Colonic mucosa (tissue), 4 donors: ENCODE measurements at regions of chr10 and their contacts with region 1.

Region 1: GRCh38 chr10:95693668-95694534 is at the start of gene TCTN3:
- DNase-seq: peak; percentile 97
- H3K4me3 ChIP-seq: peak within 1 kb of the TSS; percentile 65
- H3K27ac ChIP-seq: peak within 1 kb of the TSS; percentile 15
- H3K4me1 ChIP-seq: no peaks in the 10 kb centered on the region
- H3K27me3 ChIP-seq: no peaks in the 10 kb centered on the region
- CTCF ChIP-seq: peak; percentile 100
- total RNA-seq, gene TCTN3: 32.0 to 40.7 TPM

Region 2: DNA sequence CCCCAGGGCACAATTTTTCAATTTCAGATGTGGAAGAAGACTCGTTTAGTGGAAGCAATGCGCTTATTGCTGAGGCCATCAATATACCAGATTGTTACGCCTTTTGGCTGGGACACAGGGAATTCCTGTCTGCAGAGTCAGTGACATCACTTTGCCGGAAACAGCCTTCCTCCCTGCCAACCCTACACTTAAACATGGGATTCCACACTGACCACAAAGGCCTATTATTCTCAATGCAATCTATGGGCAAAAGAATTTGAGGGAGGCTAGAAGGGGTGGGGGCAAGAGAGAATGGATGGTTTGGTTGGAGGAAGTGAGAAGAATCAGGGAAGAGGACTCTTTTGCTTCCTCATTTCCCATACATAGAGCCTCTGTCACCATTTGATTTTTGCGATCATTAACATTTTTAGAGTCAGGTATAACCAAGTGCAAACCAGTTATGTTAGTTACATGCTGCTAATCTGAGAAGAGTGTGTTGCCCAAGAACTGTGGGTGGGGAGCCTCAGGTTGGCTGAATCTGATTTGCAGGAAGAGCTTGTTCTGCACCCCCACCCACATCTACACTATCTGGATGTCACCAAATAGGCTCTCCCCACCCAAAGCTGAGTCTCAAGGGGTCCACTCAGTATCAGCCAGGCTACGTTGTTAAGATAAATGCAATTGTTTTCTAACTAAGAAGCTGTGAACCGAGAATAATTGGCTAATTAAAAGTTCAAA is 120.3 kb after region 1 on chr10:
- intact Hi-C with region 1: no loop called
- DNase-seq: peak; percentile 22
- H3K4me3 ChIP-seq: no peak overlapping the region
- H3K27ac ChIP-seq: peak overlapping the region; percentile 15
- H3K4me1 ChIP-seq: no peaks in the 10 kb centered on the region
- H3K27me3 ChIP-seq: no peaks in the 10 kb centered on the region
- CTCF ChIP-seq: no peak

Region 3: GRCh38 chr10:95835149-95835860 is 141.4 kb after region 1 on chr10:
- intact Hi-C with region 1: loop called (anchors 2 kb)
- DNase-seq: no peak
- H3K4me3 ChIP-seq: no peak overlapping the region
- H3K27ac ChIP-seq: no peak overlapping the region
- H3K4me1 ChIP-seq: no peaks in the 10 kb centered on the region
- H3K27me3 ChIP-seq: no peaks in the 10 kb centered on the region
- CTCF ChIP-seq: no peak

Region 4: GRCh38 chr10:95841661-95842498 is 148.0 kb after region 1 on chr10:
- intact Hi-C with region 1: loop called (anchors 2 kb)
- DNase-seq: peak; percentile 67
- H3K4me3 ChIP-seq: no peak overlapping the region
- H3K27ac ChIP-seq: peak overlapping the region; percentile 18
- H3K4me1 ChIP-seq: no peaks in the 10 kb centered on the region
- H3K27me3 ChIP-seq: no peaks in the 10 kb centered on the region
- CTCF ChIP-seq: peak; percentile 49